GM12878 (cell line): ENCODE measurements at regions of chr2 and their contacts with region 1.

Region 1: GRCh38 chr2:215680605-215681598 is 245.0 kb upstream of the FN1 start:
- DNase-seq: peak; percentile 50
- ATAC-seq: peak; percentile 94
- H3K4me3 ChIP-seq: 0 out of 2 replicates have a peak overlapping the region, but pooled peaks have one; percentile 5
- H3K27ac ChIP-seq: no peak overlapping the region
- H3K4me1 ChIP-seq: no peaks in the 10 kb centered on the region
- H3K27me3 ChIP-seq: no peaks in the 10 kb centered on the region
- CTCF ChIP-seq: no peak
- EP300 ChIP-seq: peak; percentile 44 to 45; a peak in 2 of 4 replicates
- POLR2A ChIP-seq: no peak
- RAD21 ChIP-seq: no peak

Region 2: DNA sequence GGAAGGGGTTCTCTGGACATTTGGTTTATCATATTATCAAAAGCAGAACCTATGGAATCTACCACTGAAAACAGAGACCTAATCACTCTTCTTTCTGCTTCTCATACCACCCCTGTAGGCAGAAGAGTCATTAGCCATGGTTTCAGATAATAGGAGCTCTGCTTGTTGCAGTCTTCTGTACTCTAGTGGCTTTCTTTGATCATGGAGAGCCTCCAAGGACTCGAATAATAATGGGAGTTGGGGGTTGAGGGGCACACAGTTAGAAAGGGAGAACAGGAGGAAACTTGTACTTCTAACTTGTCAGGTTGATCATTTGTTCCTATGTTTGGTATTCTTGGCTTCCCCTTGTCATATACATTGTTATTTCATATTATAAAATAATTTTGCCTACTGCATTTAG is 1322.4 kb before region 1 on chr2:
- CTCF ChIA-PET with region 1: no interaction called
- POLR2A ChIA-PET with region 1: no interaction called
- RAD21 ChIA-PET with region 1: no interaction called
- SMC1A ChIA-PET with region 1: no interaction called
- in situ Hi-C with region 1: no loop called
- intact Hi-C with region 1: no loop called
- DNase-seq: no peak
- ATAC-seq: no peak
- H3K4me3 ChIP-seq: no peak overlapping the region
- H3K27ac ChIP-seq: no peak overlapping the region
- H3K4me1 ChIP-seq: no peaks in the 10 kb centered on the region
- H3K27me3 ChIP-seq: no peaks in the 10 kb centered on the region
- CTCF ChIP-seq: no peak
- EP300 ChIP-seq: no peak
- POLR2A ChIP-seq: no peak
- RAD21 ChIP-seq: no peak

Region 3: GRCh38 chr2:215567504-215567903 is 113.4 kb before region 1 on chr2:
- CTCF ChIA-PET with region 1: no interaction called
- POLR2A ChIA-PET with region 1: no interaction called
- RAD21 ChIA-PET with region 1: interaction called, 3 read pairs
- SMC1A ChIA-PET with region 1: interaction called, 11 read pairs
- in situ Hi-C with region 1: no loop called
- intact Hi-C with region 1: loop called (anchors 5 kb)
- DNase-seq: peak; percentile 38
- ATAC-seq: peak; percentile 98
- H3K4me3 ChIP-seq: no peak overlapping the region
- H3K27ac ChIP-seq: no peak overlapping the region
- H3K4me1 ChIP-seq: no peaks in the 10 kb centered on the region
- H3K27me3 ChIP-seq: no peaks in the 10 kb centered on the region
- CTCF ChIP-seq: no peak
- EP300 ChIP-seq: peak; percentile 66 to 85
- POLR2A ChIP-seq: no peak
- RAD21 ChIP-seq: no peak

Region 4: GRCh38 chr2:215664847-215665525 is 15.9 kb before region 1 on chr2:
- CTCF ChIA-PET with region 1: interaction called, 5 read pairs
- POLR2A ChIA-PET with region 1: interaction called, 3 read pairs
- RAD21 ChIA-PET with region 1: interaction called, 17 read pairs
- SMC1A ChIA-PET with region 1: interaction called, 11 read pairs
- in situ Hi-C with region 1: no loop called
- intact Hi-C with region 1: loop called (anchors 1 kb)
- DNase-seq: peak; percentile 63
- ATAC-seq: peak; percentile 93
- H3K4me3 ChIP-seq: no peak overlapping the region
- H3K27ac ChIP-seq: no peak overlapping the region
- H3K4me1 ChIP-seq: no peaks in the 10 kb centered on the region
- H3K27me3 ChIP-seq: no peaks in the 10 kb centered on the region; a peak in 1 of 4 replicates
- CTCF ChIP-seq: no peak
- EP300 ChIP-seq: peak in 1 of 2 experiments; percentile 62; a peak in 1 of 4 replicates
- POLR2A ChIP-seq: no peak
- RAD21 ChIP-seq: no peak

Region 5: DNA sequence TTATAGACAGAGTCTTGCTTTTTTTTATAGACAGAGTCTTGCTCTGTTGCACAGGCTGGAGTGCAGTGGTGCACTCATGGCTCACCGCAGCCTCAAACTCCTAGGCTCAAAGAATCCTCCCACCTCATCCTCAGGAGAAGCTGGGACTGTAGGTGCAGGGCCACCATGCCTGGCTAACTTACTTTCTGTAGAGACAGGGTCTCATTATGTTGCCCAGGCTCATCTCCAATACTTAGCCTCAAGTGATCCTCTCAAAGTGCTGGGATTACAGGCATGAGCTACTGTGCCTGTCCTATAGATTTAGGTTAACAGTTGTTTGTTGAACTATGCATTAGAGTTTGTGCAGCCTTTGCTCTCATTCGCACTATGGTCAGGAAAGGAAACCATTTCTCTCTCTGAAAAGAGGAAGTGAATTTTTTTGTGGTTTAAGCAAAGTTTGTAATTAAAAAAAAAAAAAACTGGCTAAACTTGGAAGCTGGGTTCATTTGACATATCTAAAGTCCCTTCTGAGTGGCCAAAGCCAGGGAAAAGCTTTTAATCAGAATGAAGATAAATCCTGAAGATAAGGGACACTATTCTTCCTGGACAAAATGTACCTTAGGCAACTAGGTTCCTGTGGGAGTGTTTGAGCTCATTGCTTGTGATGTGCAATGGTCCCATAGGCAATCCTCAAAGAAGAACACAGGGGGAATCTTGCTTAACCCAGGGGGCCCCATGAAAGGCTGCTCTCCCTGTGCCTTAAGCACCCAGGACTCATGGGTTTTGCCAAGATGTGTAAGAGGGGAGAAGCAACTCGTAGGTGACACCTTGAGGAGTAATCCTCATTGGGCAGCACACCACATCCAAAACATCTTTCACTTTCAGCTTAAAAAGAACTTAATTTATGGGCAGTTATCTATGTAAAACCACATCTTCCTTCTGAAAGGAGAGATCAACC is 130.8 kb after region 1 on chr2:
- CTCF ChIA-PET with region 1: interaction called, 7 read pairs
- POLR2A ChIA-PET with region 1: no interaction called
- RAD21 ChIA-PET with region 1: interaction called, 21 read pairs
- SMC1A ChIA-PET with region 1: interaction called, 9 read pairs
- in situ Hi-C with region 1: no loop called
- intact Hi-C with region 1: loop called (anchors 5 kb)
- DNase-seq: peak; percentile 90
- ATAC-seq: peak; percentile 98
- H3K4me3 ChIP-seq: peak overlapping the region; percentile 30; the same call in 1 of the 2 replicates
- H3K27ac ChIP-seq: peak overlapping the region; percentile 45
- H3K4me1 ChIP-seq: peaks cover 19% of the 10 kb centered on the region
- H3K27me3 ChIP-seq: no peaks in the 10 kb centered on the region
- CTCF ChIP-seq: no peak
- EP300 ChIP-seq: peak in 1 of 2 experiments; percentile 87; a peak in 2 of 4 replicates
- POLR2A ChIP-seq: no peak
- RAD21 ChIP-seq: no peak

Region 6: GRCh38 chr2:215880970-215881369 is 200.1 kb after region 1 on chr2:
- CTCF ChIA-PET with region 1: interaction called, 4 read pairs
- POLR2A ChIA-PET with region 1: no interaction called
- RAD21 ChIA-PET with region 1: interaction called, 10 read pairs
- SMC1A ChIA-PET with region 1: no interaction called
- in situ Hi-C with region 1: no loop called
- intact Hi-C with region 1: no loop called
- DNase-seq: peak; percentile 38
- ATAC-seq: peak; percentile 82
- H3K4me3 ChIP-seq: no peak overlapping the region
- H3K27ac ChIP-seq: no peak overlapping the region
- H3K4me1 ChIP-seq: peaks cover 15% of the 10 kb centered on the region
- H3K27me3 ChIP-seq: no peaks in the 10 kb centered on the region
- CTCF ChIP-seq: no peak
- EP300 ChIP-seq: no peak
- POLR2A ChIP-seq: no peak
- RAD21 ChIP-seq: no peak